ENCODE measurements at regions of chr2 and their contacts with region 1.

Region 1: DNA sequence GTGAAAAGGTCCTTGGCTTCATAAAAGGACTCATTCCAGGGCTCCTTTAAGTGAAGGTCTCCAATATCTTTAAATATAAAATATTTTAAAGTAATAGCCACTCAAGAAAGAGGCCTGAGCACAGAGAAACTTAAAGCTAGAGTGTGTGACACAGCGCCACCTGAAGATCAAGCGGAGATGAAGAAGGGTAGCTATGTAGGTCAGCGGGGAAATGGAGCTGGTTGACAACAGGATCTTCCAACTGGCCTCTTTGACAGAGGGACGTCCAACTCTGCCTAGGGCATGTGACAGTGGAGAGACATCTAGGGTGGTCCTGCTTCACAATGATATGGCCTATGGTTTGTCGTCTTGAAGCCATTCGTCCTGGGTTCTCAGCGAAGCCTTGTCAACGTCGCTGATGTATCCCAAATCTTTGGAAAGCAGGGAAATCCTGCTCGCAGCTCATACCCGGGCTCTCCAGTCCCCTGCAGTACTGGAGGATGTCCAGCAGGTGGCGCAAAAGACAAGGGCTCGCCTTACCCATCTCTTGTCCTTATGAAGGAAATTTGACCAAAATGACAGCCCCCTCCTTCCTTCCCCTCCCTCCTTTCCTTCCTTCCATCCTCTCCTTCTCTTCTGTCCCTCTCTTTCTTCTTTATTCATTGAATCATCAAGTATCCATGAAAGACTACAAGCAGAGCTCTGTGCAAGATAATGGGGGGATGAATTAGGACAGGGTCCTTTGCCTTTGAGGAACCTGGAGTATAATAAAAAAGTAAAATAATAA is 59.6 kb downstream of the LONRF2 start:
- DNase-seq: peak; percentile 72
- H3K4me3 Mint-ChIP-seq: no peak overlapping the region
- H3K27ac Mint-ChIP-seq: no peak overlapping the region
- H3K4me1 Mint-ChIP-seq: no peaks in the 10 kb centered on the region
- H3K27me3 Mint-ChIP-seq: peaks cover 17% of the 10 kb centered on the region

Region 2: GRCh38 chr2:99559075-99559662 is 703.6 kb before region 1 on chr2:
- CTCF ChIA-PET with region 1: interaction called, 52 read pairs
- DNase-seq: peak; percentile 87
- H3K4me3 Mint-ChIP-seq: no peak overlapping the region
- H3K27ac Mint-ChIP-seq: no peak overlapping the region
- H3K4me1 Mint-ChIP-seq: no peaks in the 10 kb centered on the region
- H3K27me3 Mint-ChIP-seq: peaks cover 3% of the 10 kb centered on the region

Region 3: DNA sequence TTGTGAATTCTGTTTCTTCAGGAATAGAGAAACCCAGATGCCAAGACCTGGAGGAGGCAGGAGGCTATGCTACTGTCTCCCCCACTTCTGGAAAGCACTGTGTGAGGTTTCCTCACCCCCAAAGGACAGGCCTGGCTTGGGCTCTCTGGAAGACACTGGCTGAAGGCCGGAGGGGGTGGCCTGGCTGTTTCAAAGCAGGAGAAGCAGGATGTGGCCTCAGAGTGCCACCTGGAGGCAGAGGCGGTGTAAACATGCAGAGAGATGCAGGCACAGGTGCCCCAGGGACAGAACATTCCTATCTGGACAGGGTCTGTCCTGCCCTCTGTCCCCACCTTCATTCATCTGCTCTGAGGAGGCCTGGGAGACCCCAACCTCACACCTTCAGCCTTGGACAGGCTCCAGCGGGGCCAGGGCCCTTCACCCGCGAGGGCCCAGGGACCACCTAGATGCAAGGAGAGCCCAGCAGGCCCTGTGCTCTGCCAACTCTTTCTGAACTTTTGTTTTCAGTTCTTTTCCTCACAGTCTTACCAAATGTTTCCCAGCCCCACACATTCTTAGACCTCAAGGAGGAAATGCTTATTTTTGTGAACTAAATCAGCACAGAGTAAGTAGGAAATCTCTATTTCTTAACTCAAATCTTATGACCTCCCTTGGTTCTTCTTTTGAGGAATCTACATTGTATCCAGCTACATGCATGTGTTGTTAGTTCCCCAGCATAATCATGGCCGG is 19.7 kb before region 1 on chr2:
- CTCF ChIA-PET with region 1: interaction called, 10 read pairs
- DNase-seq: peak; percentile 71
- H3K4me3 Mint-ChIP-seq: no peak overlapping the region
- H3K27ac Mint-ChIP-seq: no peak overlapping the region
- H3K4me1 Mint-ChIP-seq: no peaks in the 10 kb centered on the region
- H3K27me3 Mint-ChIP-seq: peaks cover 20% of the 10 kb centered on the region

Region 4: DNA sequence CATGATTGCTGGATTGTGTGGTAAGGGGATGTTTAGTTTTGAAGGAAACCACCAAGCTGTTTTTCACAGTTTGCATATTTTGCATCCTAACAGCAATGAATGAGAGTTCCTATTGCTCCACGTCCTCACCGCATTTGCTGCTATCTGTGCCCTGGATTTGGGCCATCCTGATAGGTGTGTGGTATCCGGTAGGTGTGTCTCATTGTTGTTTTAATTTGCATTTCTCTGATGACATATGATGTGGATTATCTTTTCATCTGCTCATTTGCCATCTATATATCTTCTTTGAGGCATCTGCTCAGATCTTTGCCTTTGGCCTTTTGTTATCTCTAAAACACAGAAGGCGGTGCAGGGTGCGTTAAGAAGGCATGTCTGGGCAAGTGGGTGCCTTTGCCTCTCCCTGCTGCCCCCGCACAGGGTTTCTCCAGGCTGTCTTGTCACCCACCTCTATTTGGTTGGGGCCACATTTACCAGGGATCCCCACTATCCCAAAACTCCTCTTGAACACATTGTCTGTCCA is 13.7 kb before region 1 on chr2:
- CTCF ChIA-PET with region 1: interaction called, 13 read pairs
- DNase-seq: no peak
- H3K4me3 Mint-ChIP-seq: no peak overlapping the region
- H3K27ac Mint-ChIP-seq: no peak overlapping the region
- H3K4me1 Mint-ChIP-seq: no peaks in the 10 kb centered on the region
- H3K27me3 Mint-ChIP-seq: peaks cover 15% of the 10 kb centered on the region

Region 5: DNA sequence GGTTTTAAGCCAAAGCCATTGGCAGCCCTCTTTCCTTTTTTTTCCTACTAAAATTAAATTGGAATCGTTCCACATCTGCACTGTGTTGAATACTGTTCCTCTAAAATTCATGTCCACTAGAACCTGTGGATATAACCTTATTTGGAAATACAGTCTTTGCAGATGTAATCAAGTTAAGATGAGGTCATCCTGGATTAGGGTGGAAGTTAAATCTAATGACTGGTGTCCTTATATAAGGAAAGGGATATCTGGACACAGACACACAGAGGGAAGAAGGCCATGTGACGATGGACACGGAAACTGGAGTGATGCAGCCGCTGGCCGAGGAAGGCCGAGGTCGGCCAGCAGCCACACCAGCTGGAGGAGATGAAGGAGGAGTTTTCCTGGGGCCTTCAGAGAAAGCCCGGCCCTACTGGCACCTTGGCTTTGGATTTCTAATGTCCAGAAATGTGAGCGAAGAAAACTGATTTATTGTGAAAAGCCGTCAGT is 10.1 kb after region 1 on chr2:
- CTCF ChIA-PET with region 1: interaction called, 11 read pairs
- DNase-seq: no peak
- H3K4me3 Mint-ChIP-seq: no peak overlapping the region
- H3K27ac Mint-ChIP-seq: no peak overlapping the region
- H3K4me1 Mint-ChIP-seq: peaks cover 4% of the 10 kb centered on the region
- H3K27me3 Mint-ChIP-seq: peaks cover 11% of the 10 kb centered on the region

Region 6: DNA sequence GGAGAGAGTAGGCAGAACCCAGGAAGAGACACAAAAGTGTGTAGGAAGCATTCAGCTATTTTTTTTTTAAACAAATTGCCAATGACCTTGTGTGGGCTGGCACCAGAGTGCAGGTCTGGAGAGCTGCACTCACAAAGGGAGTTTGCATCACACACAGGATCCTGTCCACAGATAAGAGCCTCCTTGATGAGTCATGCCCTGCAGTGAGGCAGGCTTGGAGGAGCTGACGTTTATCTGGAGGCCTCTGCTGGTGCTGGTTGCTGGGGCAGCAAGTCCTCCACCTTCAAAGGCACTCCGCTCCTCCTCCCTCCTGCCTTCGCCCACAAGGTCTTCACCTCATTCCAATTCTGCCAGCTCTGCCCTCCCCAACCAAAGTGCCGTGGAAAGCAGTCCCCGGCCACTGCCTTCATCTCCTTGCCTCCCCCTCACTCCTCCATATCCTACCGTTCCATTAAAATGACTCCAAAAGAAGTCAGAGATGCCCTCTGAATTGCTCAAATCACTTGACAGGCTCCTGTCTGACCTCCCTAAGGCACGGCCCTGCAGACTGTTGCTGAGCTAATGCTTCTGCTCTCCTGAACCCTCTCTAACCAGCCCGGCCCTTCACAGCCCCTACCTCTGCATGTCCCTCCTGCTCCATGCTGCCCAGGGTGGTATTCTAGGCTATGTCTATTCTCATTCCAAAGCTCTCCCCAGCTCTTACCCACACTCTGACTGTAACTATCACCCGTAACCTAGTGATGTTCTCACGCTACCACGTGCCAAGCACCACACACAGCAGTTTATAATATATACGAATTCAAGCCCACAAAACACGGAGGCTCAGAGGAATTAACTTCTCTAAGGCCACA is 28.6 kb after region 1 on chr2:
- CTCF ChIA-PET with region 1: interaction called, 25 read pairs
- DNase-seq: peak; percentile 72
- H3K4me3 Mint-ChIP-seq: no peak overlapping the region
- H3K27ac Mint-ChIP-seq: no peak overlapping the region
- H3K4me1 Mint-ChIP-seq: peaks cover under 1% of the 10 kb centered on the region
- H3K27me3 Mint-ChIP-seq: peaks cover 19% of the 10 kb centered on the region

Measured in activated naive CD4-positive, alpha-beta T cell treated with anti-CD3 and anti-CD28 coated beads, Interleukin-2, amount 10 ng/mL, durations not matched to agents 7 days and 5 days (primary cell).